ENCODE measurements at regions of chr2 and their contacts with region 1.

Region 1: DNA sequence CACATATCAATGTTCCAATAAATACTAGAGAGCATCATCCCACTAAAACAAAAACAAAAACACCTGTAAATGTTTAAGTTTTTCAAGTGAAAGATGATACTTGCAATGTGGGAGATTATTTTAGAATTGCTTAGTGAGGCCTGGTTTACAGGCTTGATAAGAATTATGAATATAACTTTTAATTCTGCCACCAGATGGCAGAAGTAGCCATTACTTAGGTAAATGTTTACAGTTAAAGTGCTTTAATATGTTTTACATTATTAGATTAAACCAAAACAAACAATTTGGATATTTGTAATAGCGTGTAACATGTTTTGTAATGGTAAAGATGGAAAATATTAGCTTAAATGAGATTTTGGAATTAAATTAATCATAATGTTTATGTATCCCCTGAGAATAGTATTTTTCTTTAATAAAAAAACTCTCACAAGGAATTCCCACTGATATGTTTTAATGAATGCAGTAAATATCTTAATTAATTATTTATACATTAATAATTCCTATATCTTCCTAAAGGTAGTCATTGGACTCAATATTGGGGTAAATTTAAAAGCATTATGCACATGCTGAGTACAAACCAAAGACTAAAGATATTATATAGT is 522.0 kb downstream of the SPAG16 start:
- DNase-seq: no peak
- H3K4me3 ChIP-seq: no peak overlapping the region
- H3K27ac ChIP-seq: no peak overlapping the region
- H3K4me1 ChIP-seq: no peaks in the 10 kb centered on the region
- H3K27me3 ChIP-seq: no peaks in the 10 kb centered on the region
- CTCF ChIP-seq: peak in 3 of 4 experiments; percentile 29 to 62 (median 34)
- POLR2A ChIP-seq: no peak

Region 2: GRCh38 chr2:214261683-214262082 is 455.5 kb after region 1 on chr2:
- intact Hi-C with region 1: no loop called
- DNase-seq: no peak
- H3K4me3 ChIP-seq: no peak overlapping the region
- H3K27ac ChIP-seq: no peak overlapping the region
- H3K4me1 ChIP-seq: no peaks in the 10 kb centered on the region
- H3K27me3 ChIP-seq: no peaks in the 10 kb centered on the region
- CTCF ChIP-seq: no peak
- POLR2A ChIP-seq: no peak

Region 3: GRCh38 chr2:215002500-215002899 is 1196.3 kb after region 1 on chr2:
- intact Hi-C with region 1: loop called (anchors 10 kb)
- DNase-seq: no peak
- H3K4me3 ChIP-seq: no peak overlapping the region
- H3K27ac ChIP-seq: no peak overlapping the region
- H3K4me1 ChIP-seq: no peaks in the 10 kb centered on the region
- H3K27me3 ChIP-seq: no peaks in the 10 kb centered on the region
- CTCF ChIP-seq: peak in 2 of 4 experiments; percentile 31 to 37
- POLR2A ChIP-seq: no peak

Region 4: GRCh38 chr2:215269397-215270119 is 1463.3 kb after region 1 on chr2:
- intact Hi-C with region 1: loop called (anchors 10 kb)
- DNase-seq: peak; percentile 78
- H3K4me3 ChIP-seq: no peak overlapping the region
- H3K27ac ChIP-seq: no peak overlapping the region
- H3K4me1 ChIP-seq: no peaks in the 10 kb centered on the region
- H3K27me3 ChIP-seq: no peaks in the 10 kb centered on the region
- CTCF ChIP-seq: peak; percentile 44 to 86 (median 60)
- POLR2A ChIP-seq: no peak